ENCODE measurements at regions of chr1 and their contacts with region 1.

Region 1: DNA sequence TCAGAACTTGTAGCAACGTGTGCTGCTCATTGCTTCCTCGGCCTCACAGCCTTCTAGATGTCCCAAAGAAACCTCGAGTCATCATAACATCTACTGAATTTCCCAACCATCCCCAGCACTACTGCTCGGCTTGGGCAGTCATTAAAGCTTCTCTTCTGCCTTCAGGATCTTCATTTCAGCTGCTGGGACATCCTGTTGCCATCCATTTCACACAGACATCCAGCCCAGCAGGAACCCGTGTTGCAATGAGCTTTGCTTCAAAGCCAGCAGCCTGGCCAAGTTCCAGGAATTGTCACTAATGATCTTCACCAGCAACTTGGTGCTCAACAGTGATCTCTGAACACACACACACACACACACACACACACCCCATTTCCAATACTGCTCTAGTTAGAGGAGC is 18.5 kb downstream of the WLS start:
- DNase-seq: peak; percentile 54 to 76
- ATAC-seq: peak; percentile 90
- H3K4me3 ChIP-seq: no peak overlapping the region
- H3K27ac ChIP-seq: peak overlapping the region in 3 of 4 donors; percentile 46 to 61 (median 48)
- H3K4me1 ChIP-seq: peaks cover 14 to 19% of the 10 kb centered on the region in 2 donors
- H3K27me3 ChIP-seq: no peaks in the 10 kb centered on the region
- CTCF ChIP-seq: no peak
- POLR2A ChIP-seq: no peak

Region 2: DNA sequence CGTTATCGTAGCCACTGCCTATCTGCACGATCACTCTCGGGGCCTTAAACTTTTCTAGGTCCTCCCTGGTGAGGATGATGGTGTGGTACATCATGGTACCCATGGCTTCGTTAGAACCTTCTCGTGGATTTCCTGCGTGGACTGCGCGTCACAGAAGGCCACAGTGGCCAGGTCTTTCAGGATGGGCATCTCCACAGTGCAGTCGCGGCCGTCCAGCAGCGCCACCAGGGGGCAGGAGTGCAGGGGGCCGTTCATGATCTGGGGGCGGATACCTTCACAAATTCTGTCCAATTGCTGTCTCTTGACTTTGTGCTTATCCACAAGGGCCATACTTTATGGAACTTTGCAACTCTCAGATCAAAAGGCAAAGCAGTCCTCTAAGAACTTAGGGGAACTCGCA is 51.1 kb before region 1 on chr1:
- in situ Hi-C with region 1: no loop called
- intact Hi-C with region 1: no loop called
- DNase-seq: no peak
- ATAC-seq: no peak
- H3K4me3 ChIP-seq: no peak overlapping the region
- H3K27ac ChIP-seq: no peak overlapping the region
- H3K4me1 ChIP-seq: peaks cover 0 to 3% of the 10 kb centered on the region in 2 donors
- H3K27me3 ChIP-seq: no peaks in the 10 kb centered on the region
- CTCF ChIP-seq: no peak
- POLR2A ChIP-seq: no peak

Region 3: GRCh38 chr1:68197891-68198290 is 16.0 kb before region 1 on chr1:
- in situ Hi-C with region 1: no loop called
- intact Hi-C with region 1: loop called (anchors 2 kb)
- DNase-seq: peak in 1 of 2 donors; percentile 8
- ATAC-seq: peak; percentile 99
- H3K4me3 ChIP-seq: no peak overlapping the region
- H3K27ac ChIP-seq: peak overlapping the region; percentile 61 to 77 (median 70)
- H3K4me1 ChIP-seq: peaks cover 45 to 46% of the 10 kb centered on the region in 2 donors
- H3K27me3 ChIP-seq: no peaks in the 10 kb centered on the region
- CTCF ChIP-seq: no peak
- POLR2A ChIP-seq: no peak